ENCODE measurements at regions of chr9 and their contacts with region 1.

Region 1: GRCh38 chr9:35646533-35647265 is 4.0 kb downstream of the SIT1 start:
- DNase-seq: peak; percentile 85
- H3K4me3 ChIP-seq: peak overlapping the region; percentile 62 to 95 (median 72)
- H3K27ac ChIP-seq: peak overlapping the region; percentile 85
- H3K4me1 ChIP-seq: peaks cover 6% of the 10 kb centered on the region
- H3K27me3 ChIP-seq: no peaks in the 10 kb centered on the region
- CTCF ChIP-seq: peak; percentile 77 to 98

Region 2: DNA sequence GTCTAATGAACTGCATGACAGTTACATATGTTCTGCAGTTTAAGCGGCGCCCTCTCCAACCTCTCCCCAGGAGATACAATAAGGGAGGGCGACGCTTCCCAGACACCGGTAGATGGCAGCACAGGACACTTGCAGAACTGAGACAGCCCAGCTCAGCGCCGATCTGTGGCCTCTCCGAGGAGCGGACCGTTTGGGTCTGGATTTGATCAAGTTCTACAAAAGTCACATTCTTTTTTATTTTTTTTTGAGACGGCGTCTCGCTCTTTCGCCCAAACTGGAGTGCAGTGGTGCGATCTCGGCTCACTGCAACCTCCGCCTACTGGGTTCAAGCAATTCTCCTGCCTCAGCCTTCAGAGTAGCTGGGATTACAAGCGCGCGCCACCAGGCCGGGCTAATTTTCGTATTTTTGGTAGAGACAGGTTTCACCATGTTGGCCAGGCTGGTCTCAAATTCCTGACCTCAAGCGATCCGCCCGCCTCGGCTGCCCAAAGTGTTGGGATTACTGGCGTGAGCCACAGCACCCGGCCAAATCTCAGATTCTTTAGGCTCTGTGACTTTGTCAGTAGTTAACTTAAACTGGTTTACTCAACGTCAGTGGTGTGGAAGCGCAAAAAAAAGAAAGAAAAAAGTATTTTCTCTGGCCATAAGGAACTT is 529.7 kb before region 1 on chr9:
- CTCF ChIA-PET with region 1: no interaction called
- dilution Hi-C with region 1: no loop called
- in situ Hi-C with region 1: no loop called
- intact Hi-C with region 1: loop called (anchors 5 kb)
- DNase-seq: peak; percentile 84
- H3K4me3 ChIP-seq: peak overlapping the region; percentile 44 to 84 (median 60)
- H3K27ac ChIP-seq: no peak overlapping the region
- H3K4me1 ChIP-seq: peaks cover 23% of the 10 kb centered on the region
- H3K27me3 ChIP-seq: no peaks in the 10 kb centered on the region
- CTCF ChIP-seq: peak; percentile 95 to 99

Region 3: GRCh38 chr9:35603987-35604577 is 42.6 kb before region 1 on chr9:
- CTCF ChIA-PET with region 1: no interaction called
- dilution Hi-C with region 1: no loop called
- in situ Hi-C with region 1: loop called in 1 of 2 experiments (anchors 5 kb)
- intact Hi-C with region 1: loop called (anchors 1 kb)
- DNase-seq: peak; percentile 99
- H3K4me3 ChIP-seq: peak overlapping the region; percentile 60 to 67 (median 64)
- H3K27ac ChIP-seq: peak overlapping the region; percentile 68
- H3K4me1 ChIP-seq: peaks cover 28% of the 10 kb centered on the region
- H3K27me3 ChIP-seq: no peaks in the 10 kb centered on the region
- CTCF ChIP-seq: peak; percentile 82 to 83

Region 4: DNA sequence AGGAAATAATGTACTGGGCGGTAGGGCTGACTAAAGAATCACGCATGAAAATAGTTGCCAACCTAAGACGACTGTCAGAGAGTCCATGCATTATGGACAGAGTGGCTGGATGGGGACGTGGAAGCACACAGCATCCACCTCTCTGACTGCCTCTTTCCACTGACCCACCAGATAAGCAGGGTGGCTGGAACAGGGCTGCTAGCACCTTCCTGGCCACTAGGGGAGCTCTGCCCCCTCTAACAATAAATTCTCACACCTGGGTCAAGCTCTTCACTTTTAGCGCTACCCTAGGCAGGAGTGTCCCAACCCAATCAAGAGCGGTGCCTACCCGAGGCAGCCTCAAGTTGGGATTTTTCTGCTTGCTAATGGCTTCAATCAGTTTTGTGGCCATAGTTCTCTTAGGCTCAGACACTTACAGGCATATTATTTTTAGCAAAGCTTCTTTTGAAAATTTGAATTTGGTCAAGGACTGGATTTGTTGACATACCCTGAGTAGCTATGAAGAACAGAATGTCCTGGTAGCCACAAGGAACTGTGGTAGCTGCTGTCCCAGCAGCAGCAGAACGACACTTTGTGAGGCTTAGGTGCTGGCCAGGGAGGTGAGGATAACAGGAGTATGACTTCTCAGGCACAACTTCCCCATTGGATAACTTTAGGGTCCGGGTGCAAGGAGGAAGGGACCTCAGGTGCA is 50.0 kb after region 1 on chr9:
- CTCF ChIA-PET with region 1: interaction called, 5 read pairs
- dilution Hi-C with region 1: no loop called
- in situ Hi-C with region 1: no loop called
- intact Hi-C with region 1: loop called (anchors 1 kb)
- DNase-seq: peak; percentile 42
- H3K4me3 ChIP-seq: no peak overlapping the region
- H3K27ac ChIP-seq: no peak overlapping the region
- H3K4me1 ChIP-seq: no peaks in the 10 kb centered on the region
- H3K27me3 ChIP-seq: no peaks in the 10 kb centered on the region
- CTCF ChIP-seq: peak; percentile 89 to 94

Region 5: GRCh38 chr9:35723908-35724420 is 77.3 kb after region 1 on chr9:
- CTCF ChIA-PET with region 1: interaction called, 14 read pairs
- dilution Hi-C with region 1: no loop called
- in situ Hi-C with region 1: no loop called
- intact Hi-C with region 1: no loop called
- DNase-seq: no peak
- H3K4me3 ChIP-seq: no peak overlapping the region
- H3K27ac ChIP-seq: no peak overlapping the region
- H3K4me1 ChIP-seq: peaks cover 23% of the 10 kb centered on the region
- H3K27me3 ChIP-seq: no peaks in the 10 kb centered on the region
- CTCF ChIP-seq: no peak

Region 6: GRCh38 chr9:35790385-35791296 is 143.9 kb after region 1 on chr9:
- CTCF ChIA-PET with region 1: no interaction called
- dilution Hi-C with region 1: no loop called
- in situ Hi-C with region 1: no loop called
- intact Hi-C with region 1: loop called (anchors 1 kb)
- DNase-seq: peak; percentile 60
- H3K4me3 ChIP-seq: no peak overlapping the region
- H3K27ac ChIP-seq: no peak overlapping the region
- H3K4me1 ChIP-seq: peaks cover 11% of the 10 kb centered on the region
- H3K27me3 ChIP-seq: no peaks in the 10 kb centered on the region
- CTCF ChIP-seq: peak; percentile 83

Measured in mammary epithelial cell (primary cell).